PC-3 (cell line): ENCODE measurements at regions of chr6 and their contacts with region 1.

Region 1: DNA sequence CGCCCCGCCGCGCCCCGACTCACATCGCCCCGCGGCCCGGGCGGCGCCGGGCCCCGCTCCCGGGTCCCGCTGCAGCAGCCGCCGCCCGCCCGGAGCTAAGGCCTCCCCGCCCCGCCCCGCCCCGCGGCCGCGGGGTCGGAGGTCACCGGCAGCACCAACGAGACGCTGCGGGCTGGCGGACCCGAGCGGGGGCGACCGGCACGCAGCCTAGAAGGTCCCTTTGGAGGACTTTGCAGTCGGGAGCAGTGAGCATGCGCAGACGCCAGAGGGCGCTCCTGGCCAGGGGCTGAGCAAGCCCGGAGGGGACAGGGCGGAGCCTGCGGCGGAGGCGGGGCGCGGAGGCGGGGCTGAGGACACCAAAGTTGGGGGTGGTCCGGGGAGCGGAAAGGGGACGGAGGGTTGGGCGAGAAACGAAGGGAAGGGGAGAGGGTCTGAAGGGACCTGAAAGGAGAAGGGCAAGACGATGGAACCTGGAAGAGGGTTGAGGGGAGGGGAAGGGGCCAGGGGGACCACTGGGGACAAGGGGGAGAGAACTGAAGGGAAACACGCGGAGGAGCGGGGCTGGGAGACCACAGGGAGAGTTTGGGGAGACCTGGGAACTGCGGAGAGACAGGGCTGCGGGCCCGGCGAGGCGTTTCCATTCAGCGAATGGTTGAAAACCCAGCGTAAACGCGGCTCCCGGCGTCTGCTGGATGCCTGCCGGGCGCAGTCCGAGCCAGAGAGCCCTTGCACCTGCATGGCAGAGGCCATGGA is at the start of gene FRS3:
- DNase-seq: peak; percentile 98
- ATAC-seq: peak; percentile 82
- H3K4me3 ChIP-seq: peak within 1 kb of the TSS; percentile 93
- H3K27ac ChIP-seq: no peak within 1 kb of the TSS
- H3K4me1 ChIP-seq: peaks cover 15% of the 10 kb centered on the region
- H3K27me3 ChIP-seq: no peaks in the 10 kb centered on the region
- CTCF ChIP-seq: peak; percentile 88
- total RNA-seq, gene FRS3: 3.9 and 4.3 TPM in 2 replicates

Region 2: GRCh38 chr6:40054602-40055001 is 1725.4 kb before region 1 on chr6:
- CTCF ChIA-PET with region 1: no interaction called
- POLR2A ChIA-PET with region 1: no interaction called
- intact Hi-C with region 1: no loop called
- DNase-seq: no peak
- ATAC-seq: no peak
- H3K4me3 ChIP-seq: no peak overlapping the region
- H3K27ac ChIP-seq: no peak overlapping the region
- H3K4me1 ChIP-seq: no peaks in the 10 kb centered on the region
- H3K27me3 ChIP-seq: no peaks in the 10 kb centered on the region
- CTCF ChIP-seq: no peak

Region 3: DNA sequence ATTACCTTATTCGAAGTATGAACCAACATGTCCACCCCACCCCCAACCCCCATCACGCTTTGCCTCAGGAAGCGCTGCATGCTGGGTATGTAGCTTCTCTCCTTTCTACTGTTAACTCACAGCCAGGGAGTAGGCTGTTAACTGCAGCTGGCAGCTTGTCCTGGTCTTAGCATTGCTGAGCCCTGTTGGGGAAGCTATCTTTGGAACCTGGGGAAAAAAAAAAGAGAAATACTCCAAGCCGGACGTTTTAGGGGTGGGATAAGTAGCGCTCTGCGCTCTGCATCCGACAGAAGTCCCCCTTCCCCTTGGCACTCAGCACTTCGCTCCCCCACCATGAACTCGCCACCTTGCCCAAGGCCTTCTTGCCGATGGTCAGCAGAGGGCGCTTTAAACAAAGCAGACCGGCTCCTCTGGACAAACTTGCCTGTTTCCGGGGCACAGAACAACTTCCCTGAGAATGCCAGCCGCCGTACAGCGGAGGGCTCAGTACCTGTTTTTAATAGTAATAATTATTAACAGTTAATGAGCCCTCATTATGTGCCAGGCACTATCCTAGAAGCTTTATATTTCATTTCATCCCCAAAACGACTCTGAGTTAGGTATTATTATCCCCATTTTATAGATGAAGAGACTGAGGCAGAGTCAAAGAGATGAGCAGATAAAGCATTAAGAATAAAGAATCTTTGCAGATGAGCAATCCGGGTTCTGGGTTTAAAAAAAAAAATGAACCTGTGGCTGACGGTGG is 176.9 kb before region 1 on chr6:
- CTCF ChIA-PET with region 1: no interaction called
- POLR2A ChIA-PET with region 1: no interaction called
- intact Hi-C with region 1: loop called (anchors 10 kb)
- DNase-seq: peak; percentile 85
- ATAC-seq: peak; percentile 83
- H3K4me3 ChIP-seq: peak overlapping the region; percentile 45; the same call in 1 of the 2 replicates
- H3K27ac ChIP-seq: no peak overlapping the region
- H3K4me1 ChIP-seq: peaks cover 7% of the 10 kb centered on the region
- H3K27me3 ChIP-seq: no peaks in the 10 kb centered on the region
- CTCF ChIP-seq: peak; percentile 97

Region 4: GRCh38 chr6:41735427-41736356 is 44.3 kb before region 1 on chr6 and contains the start of gene TFEB:
- CTCF ChIA-PET with region 1: interaction called, 3 read pairs
- POLR2A ChIA-PET with region 1: no interaction called
- intact Hi-C with region 1: loop called (anchors 1 kb)
- DNase-seq: peak; percentile 92
- ATAC-seq: peak; percentile 69
- H3K4me3 ChIP-seq: peak within 1 kb of the TSS; percentile 71
- H3K27ac ChIP-seq: no peak within 1 kb of the TSS
- H3K4me1 ChIP-seq: peaks cover 12% of the 10 kb centered on the region; the same call in 1 of the 2 replicates
- H3K27me3 ChIP-seq: no peaks in the 10 kb centered on the region
- CTCF ChIP-seq: peak; percentile 71
- total RNA-seq, gene TFEB: 4.2 and 5.5 TPM in 2 replicates

Region 5: GRCh38 chr6:41801380-41801779 is 21.4 kb after region 1 on chr6:
- CTCF ChIA-PET with region 1: no interaction called
- POLR2A ChIA-PET with region 1: no interaction called
- intact Hi-C with region 1: no loop called
- DNase-seq: peak; percentile 55
- ATAC-seq: peak; percentile 73
- H3K4me3 ChIP-seq: no peak overlapping the region
- H3K27ac ChIP-seq: no peak overlapping the region
- H3K4me1 ChIP-seq: no peaks in the 10 kb centered on the region
- H3K27me3 ChIP-seq: no peaks in the 10 kb centered on the region
- CTCF ChIP-seq: peak; percentile 80

Region 6: DNA sequence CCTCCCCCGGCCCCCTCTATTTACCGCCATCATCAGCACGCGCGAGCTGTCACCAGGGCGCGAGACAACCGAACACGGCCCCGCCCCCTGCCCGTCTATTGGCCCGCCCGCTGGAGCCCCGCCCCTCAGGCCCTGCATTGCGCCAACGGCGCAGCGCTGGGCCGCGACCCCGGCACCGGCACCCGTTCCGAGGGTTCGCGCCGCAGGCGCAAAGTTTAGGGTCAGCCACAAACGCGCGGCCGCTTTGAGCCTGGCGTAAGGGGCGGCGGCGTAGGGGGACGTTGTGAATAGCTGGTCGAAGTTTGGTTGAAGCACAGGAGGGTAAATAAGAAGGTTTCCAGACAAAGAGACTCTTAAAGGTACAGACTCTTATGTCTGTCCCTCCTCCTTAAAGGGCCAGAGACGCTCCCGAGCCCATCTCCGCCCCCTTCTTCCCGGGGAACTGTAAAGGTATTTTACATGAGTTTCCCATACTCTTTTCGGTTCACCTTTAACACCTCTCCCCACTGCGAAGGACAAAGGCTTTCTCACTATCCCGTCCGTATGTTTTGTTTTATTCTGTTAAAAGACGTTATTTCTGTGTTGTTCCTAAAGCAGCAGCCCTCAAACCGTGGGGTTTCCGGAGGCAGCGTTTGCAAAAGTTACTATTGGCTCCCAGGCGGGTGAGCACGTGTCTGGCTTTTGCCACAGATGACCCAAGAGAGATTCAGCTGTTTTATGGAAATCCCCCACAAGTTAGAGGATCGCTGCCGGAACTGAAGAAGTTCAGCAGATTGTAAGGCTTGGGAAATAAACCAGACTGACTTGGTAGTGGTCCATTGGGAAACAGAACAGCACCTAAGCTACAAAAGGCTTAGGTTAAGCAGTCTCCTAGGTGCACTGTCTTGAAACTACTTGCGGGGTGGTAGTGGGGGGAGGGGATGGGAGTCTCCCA is 115.6 kb after region 1 on chr6 and contains the start of gene USP49:
- CTCF ChIA-PET with region 1: no interaction called
- POLR2A ChIA-PET with region 1: no interaction called
- intact Hi-C with region 1: no loop called
- DNase-seq: peak; percentile 82
- ATAC-seq: peak; percentile 92
- H3K4me3 ChIP-seq: peak within 1 kb of the TSS; percentile 85
- H3K27ac ChIP-seq: peak within 1 kb of the TSS; percentile 67
- H3K4me1 ChIP-seq: peaks cover 16% of the 10 kb centered on the region
- H3K27me3 ChIP-seq: no peaks in the 10 kb centered on the region
- CTCF ChIP-seq: no peak
- total RNA-seq, gene USP49: 2.3 and 5.7 TPM in 2 replicates

Region 7: DNA sequence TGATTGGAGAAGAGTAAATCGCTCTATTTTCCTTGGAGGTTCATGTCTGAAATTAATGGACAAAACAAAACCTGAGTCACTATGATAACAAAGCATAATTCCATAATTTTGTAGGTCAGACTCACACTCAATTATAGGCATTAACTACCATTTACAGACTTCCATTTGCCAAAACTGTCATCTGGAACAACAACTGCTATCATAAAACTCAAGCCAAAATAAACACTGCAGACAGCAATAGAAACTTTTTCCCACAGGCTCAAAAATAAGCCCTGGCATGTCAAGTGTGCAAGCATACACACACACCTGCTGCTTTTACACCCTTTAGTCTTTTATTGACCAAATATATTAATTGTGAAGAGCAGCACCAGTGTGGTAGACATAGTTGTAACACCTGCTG is 430.6 kb after region 1 on chr6:
- CTCF ChIA-PET with region 1: no interaction called
- POLR2A ChIA-PET with region 1: no interaction called
- intact Hi-C with region 1: no loop called
- DNase-seq: peak; percentile 42
- ATAC-seq: peak; percentile 8
- H3K4me3 ChIP-seq: no peak overlapping the region
- H3K27ac ChIP-seq: peak overlapping the region; percentile 91
- H3K4me1 ChIP-seq: peaks cover 90% of the 10 kb centered on the region
- H3K27me3 ChIP-seq: no peaks in the 10 kb centered on the region
- CTCF ChIP-seq: no peak